Gastrocnemius medialis (tissue), 4 donors: ENCODE measurements at regions of chrX and their contacts with region 1.

Region 1: DNA sequence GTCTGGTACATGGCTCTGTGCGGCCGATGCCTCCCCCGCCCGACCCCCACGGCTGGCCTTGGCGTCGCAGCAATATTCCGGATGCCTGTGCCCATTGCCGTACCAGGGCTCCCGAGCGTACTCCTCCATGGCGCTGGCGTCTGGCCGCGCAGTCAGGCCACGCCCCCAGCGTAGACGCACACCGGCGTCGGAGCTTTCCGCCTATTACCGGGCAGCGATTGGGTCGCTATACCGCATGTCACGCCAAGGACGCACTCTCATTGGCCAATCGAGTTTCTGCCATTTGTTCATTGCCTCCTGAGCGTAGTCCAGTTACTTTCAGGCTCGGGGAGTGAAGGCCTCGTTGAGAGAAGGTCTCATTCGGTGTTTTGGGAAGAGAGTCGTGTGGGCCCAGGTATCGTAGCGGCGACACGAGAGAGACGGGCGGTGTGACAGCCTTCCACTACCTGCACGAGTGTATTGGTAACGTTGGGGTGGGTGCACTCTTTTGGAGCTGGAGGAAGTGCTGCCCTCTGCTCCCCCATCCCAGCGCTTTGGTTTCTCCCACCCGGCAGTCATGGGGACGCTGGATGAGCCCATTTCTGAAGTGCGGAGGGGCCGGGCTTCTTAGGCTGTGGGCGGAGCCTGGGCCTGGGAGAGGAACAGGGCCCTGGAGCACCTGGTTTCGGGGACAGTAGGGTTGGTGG is at the starts of genes PQBP1 and TIMM17B:
- DNase-seq: peak; percentile 87 to 92
- ATAC-seq: peak; percentile 95 to 97
- H3K4me3 ChIP-seq: peak within 1 kb of the TSS; percentile 62 to 79 (median 72)
- H3K27ac ChIP-seq: peak within 1 kb of the TSS; percentile 90 to 98 (median 95)
- H3K4me1 ChIP-seq: peaks cover 0 to 12% of the 10 kb centered on the region in 2 donors
- H3K27me3 ChIP-seq: no peaks in the 10 kb centered on the region
- CTCF ChIP-seq: no peak
- POLR2A ChIP-seq: peak; percentile 76 to 88
- total RNA-seq, gene PQBP1: 61.3 to 90.4 (median 67.8) TPM
- total RNA-seq, gene TIMM17B: 53.3 to 103 (median 68.5) TPM

Region 2: GRCh38 chrX:49002091-49002935 is 104.5 kb after region 1 on chrX and contains the start of gene GRIPAP1:
- in situ Hi-C with region 1: no loop called
- intact Hi-C with region 1: loop called (anchors 5 kb)
- DNase-seq: peak; percentile 47 to 61
- ATAC-seq: peak; percentile 96 to 97
- H3K4me3 ChIP-seq: peak within 1 kb of the TSS; percentile 69 to 89 (median 75)
- H3K27ac ChIP-seq: peak within 1 kb of the TSS; percentile 77 to 89 (median 83)
- H3K4me1 ChIP-seq: peaks cover 3 to 7% of the 10 kb centered on the region in 2 donors
- H3K27me3 ChIP-seq: no peaks in the 10 kb centered on the region
- CTCF ChIP-seq: no peak
- POLR2A ChIP-seq: peak; percentile 46 to 53
- total RNA-seq, gene GRIPAP1: 8.6 to 19.3 (median 10.1) TPM

Region 3: DNA sequence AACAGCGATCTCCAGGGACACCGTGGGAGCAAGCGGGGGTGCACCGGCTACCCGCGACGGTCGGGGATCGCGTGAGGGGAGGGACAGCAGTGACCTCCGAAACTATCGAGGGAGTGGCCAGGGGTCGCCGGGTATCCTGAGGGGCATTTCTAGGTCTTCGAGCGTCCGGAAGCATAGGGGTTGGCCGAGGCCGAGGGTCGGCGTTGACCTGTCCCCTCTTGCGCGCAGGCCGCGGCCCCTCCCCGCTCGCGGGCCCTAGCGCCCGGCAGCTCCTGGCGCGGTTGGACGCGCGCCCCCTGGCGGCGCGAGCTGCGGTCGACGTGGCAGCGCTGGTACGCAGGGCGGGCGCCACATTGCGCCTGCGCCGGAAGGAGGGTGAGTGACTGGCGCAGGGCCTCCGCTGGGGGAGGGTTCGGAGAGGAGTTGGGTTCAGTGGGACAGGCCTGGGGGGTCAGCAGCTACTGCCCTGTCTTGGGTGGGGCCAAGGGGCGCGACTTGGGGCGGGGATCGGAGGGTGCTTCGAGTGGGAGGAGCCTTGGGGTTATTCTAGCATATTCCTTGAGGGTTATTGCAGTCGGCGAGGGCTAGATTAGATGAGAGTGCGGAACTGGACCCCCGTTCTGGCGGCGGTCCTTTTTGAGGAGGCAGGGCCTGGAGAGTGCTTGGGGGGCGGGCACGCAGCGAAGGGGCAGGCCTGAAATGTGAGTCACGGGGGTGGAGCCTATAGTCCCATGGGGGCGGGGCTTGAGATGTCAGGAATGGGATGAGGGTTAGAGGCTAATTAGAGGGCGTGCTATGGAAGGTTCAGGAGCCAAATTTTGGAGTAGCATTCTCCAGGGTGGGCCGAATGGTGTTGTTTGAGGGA is 266.0 kb after region 1 on chrX:
- in situ Hi-C with region 1: no loop called
- intact Hi-C with region 1: loop called (anchors 10 kb)
- DNase-seq: peak; percentile 76 to 87
- ATAC-seq: peak; percentile 49 to 60
- H3K4me3 ChIP-seq: peak overlapping the region; percentile 37 to 61 (median 51)
- H3K27ac ChIP-seq: peak overlapping the region; percentile 93 to 98 (median 95)
- H3K4me1 ChIP-seq: peaks cover 8 to 10% of the 10 kb centered on the region in 2 donors
- H3K27me3 ChIP-seq: no peaks in the 10 kb centered on the region
- CTCF ChIP-seq: peak; percentile 56 to 93 (median 86)
- POLR2A ChIP-seq: peak; percentile 58 to 59